Esophagus muscularis mucosa (tissue), 4 donors: ENCODE measurements at regions of chr6 and their contacts with region 1.

Region 1: GRCh38 chr6:63635588-63636517 is at the start of gene PHF3:
- DNase-seq: peak; percentile 95
- H3K4me3 ChIP-seq: peak within 1 kb of the TSS; percentile 80 to 99 (median 92)
- H3K27ac ChIP-seq: peak within 1 kb of the TSS; percentile 95 to 99 (median 96)
- H3K4me1 ChIP-seq: peaks cover 31 to 49% (median 46%) of the 10 kb centered on the region in 4 donors
- H3K27me3 ChIP-seq: no peaks in the 10 kb centered on the region
- CTCF ChIP-seq: peak in 2 of 3 experiments; percentile 24 to 32
- EP300 ChIP-seq: no peak
- POLR2A ChIP-seq: peak; percentile 23
- total RNA-seq, gene PHF3: 55.5 to 73.1 (median 56.6) TPM

Region 2: GRCh38 chr6:63571881-63572732 is 63.7 kb before region 1 on chr6 and contains the starts of genes LOC128125822 and PTP4A1:
- intact Hi-C with region 1: loop called (anchors 10 kb)
- DNase-seq: peak; percentile 99
- H3K4me3 ChIP-seq: peak within 1 kb of the TSS; percentile 89 to 97 (median 94)
- H3K27ac ChIP-seq: peak within 1 kb of the TSS; percentile 100
- H3K4me1 ChIP-seq: peaks cover 4 to 29% (median 24%) of the 10 kb centered on the region in 4 donors
- H3K27me3 ChIP-seq: no peaks in the 10 kb centered on the region
- CTCF ChIP-seq: no peak
- EP300 ChIP-seq: peak; percentile 69
- POLR2A ChIP-seq: peak; percentile 98
- total RNA-seq, gene PTP4A1: 23.7 to 31.3 (median 27.8) TPM

Region 3: DNA sequence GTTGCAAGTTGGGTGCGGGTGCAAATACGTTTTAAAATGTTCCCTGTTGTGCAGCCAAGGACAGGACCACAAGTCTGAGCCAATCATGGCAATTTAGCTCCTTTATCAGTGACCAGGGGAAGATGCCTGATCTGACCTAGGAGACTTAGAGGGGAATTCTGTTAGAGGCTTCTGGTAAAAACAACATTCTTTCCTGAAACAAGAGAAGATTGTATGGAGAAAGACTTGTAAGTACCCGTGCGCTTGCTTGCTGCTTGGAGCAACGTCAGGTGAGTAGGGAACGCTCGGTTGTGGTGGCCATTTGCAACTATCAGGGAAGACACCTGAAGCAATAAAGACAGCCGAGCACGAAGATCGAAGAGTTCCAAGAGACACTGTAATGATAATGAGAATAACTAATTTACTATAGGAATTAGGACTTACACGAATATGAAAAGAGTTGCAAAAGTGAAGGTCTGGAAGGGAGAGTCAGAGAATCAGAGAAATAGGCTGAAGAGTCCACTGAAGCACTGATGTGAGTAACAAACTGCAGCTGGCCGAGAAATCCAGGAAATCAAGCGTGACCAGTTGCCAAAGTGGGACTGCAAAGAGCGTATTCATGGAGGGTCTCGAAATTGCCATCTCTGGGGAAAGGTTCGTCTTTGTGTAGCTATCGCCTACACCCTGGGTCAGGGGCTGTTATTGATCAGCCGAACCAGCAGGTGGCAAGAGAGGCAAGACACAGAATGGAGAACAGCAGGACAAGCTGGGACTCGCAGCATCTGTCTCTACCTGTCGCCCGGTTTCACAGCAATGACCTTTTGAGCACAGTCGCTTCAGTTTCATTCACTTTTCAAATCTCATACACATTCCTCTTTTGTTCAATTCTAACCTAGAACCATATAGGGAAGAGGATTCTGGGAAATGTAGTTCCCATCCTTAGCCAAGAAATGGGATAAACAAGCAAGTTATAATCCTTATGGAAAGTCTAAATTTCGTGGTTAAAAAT is 37.5 kb before region 1 on chr6:
- intact Hi-C with region 1: loop called (anchors 5 kb)
- DNase-seq: no peak
- H3K4me3 ChIP-seq: peak overlapping the region; percentile 46 to 62 (median 49)
- H3K27ac ChIP-seq: no peak overlapping the region
- H3K4me1 ChIP-seq: peaks cover 0 to 14% (median 8%) of the 10 kb centered on the region in 4 donors
- H3K27me3 ChIP-seq: no peaks in the 10 kb centered on the region
- CTCF ChIP-seq: peak; percentile 86 to 96 (median 87)
- EP300 ChIP-seq: no peak
- POLR2A ChIP-seq: no peak

Region 4: DNA sequence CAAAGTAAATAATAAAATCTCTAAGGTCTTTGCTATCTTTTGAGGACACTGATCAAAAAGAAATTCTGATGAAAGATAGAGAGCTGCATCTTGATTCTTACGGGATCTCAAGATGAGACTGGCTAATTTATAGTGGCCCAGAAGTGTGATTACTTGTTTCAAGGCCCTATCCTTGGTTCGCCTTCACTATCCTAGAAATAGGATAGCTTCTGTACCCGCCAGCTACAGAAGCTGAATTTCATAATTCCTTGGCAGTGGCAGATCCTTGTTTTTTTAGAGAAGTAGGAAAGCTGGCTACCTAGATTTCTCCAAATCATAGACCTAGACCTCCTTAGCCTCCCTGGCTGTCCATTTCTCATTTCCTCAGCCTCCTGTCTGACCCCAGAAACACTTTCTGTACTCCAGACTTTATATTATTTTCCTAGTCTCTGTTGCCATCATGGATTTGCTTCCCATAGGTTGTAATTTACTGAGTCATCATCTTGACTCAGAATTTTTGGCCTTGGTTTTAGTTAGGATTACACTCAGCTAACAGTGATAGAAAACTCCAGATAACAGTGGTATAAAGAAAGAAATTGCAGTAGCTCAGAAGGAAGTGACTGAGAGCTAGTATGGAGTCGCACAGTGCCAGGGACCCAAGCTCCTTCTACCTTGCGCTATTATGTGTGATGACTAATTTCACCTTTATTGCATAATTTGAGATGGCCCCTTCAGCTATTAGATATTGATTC is 27.5 kb after region 1 on chr6:
- intact Hi-C with region 1: loop called (anchors 1 kb)
- DNase-seq: no peak
- H3K4me3 ChIP-seq: no peak overlapping the region
- H3K27ac ChIP-seq: no peak overlapping the region
- H3K4me1 ChIP-seq: peaks cover 11 to 60% (median 45%) of the 10 kb centered on the region in 4 donors
- H3K27me3 ChIP-seq: no peaks in the 10 kb centered on the region
- CTCF ChIP-seq: no peak
- EP300 ChIP-seq: no peak
- POLR2A ChIP-seq: no peak

Region 5: DNA sequence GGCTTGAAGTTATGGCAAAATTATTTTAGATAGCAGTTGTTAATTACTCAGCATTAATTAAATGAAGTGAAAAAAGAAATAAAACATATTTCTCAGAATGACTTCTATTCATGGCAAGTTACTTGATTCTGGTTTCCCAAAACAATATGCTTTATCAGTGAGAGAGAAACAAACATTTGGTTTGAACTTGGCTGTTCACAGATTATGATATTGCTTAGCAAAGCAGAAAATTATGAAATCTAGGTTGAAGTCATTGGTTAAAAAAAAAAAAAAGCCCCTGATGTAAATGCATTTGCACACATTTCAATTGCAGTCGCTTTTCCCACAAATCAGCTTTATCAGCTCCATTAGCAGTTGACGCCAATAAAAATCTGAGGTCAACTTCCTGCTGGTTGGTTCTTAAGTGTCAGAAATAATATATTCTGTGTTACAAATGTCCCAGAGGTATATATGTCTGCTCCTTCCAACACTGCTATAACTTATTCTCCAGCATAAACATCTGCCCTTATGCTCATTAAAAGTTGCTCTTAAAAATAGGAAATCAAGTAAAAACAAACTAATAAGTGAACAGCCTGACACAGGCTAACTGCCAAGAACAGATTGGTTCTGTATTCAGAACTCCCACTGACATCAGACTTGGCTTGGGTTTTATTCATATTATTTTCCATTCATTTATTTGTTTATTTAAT is 275.2 kb after region 1 on chr6:
- intact Hi-C with region 1: no loop called
- DNase-seq: no peak
- H3K4me3 ChIP-seq: no peak overlapping the region
- H3K27ac ChIP-seq: no peak overlapping the region
- H3K4me1 ChIP-seq: no peaks in the 10 kb centered on the region
- H3K27me3 ChIP-seq: no peaks in the 10 kb centered on the region
- CTCF ChIP-seq: no peak
- EP300 ChIP-seq: no peak
- POLR2A ChIP-seq: no peak